Naive thymus-derived CD4-positive, alpha-beta T cell (primary cell): ENCODE measurements at regions of chr1 and their contacts with region 1.

Region 1: GRCh38 chr1:7042322-7043190 is 257.3 kb downstream of the CAMTA1 start:
- DNase-seq: peak in 2 of 9 donors; percentile 11 to 12
- ATAC-seq: no peak
- H3K4me3 ChIP-seq: no peak overlapping the region
- H3K4me3 Mint-ChIP-seq: no peak overlapping the region
- H3K27ac ChIP-seq: no peak overlapping the region
- H3K27ac Mint-ChIP-seq: no peak overlapping the region
- H3K4me1 ChIP-seq: no peaks in the 10 kb centered on the region
- H3K4me1 Mint-ChIP-seq: no peaks in the 10 kb centered on the region
- H3K27me3 ChIP-seq: no peaks in the 10 kb centered on the region
- H3K27me3 Mint-ChIP-seq: peaks cover 3 to 12% (median 4%) of the 10 kb centered on the region in 5 donors

Region 2: DNA sequence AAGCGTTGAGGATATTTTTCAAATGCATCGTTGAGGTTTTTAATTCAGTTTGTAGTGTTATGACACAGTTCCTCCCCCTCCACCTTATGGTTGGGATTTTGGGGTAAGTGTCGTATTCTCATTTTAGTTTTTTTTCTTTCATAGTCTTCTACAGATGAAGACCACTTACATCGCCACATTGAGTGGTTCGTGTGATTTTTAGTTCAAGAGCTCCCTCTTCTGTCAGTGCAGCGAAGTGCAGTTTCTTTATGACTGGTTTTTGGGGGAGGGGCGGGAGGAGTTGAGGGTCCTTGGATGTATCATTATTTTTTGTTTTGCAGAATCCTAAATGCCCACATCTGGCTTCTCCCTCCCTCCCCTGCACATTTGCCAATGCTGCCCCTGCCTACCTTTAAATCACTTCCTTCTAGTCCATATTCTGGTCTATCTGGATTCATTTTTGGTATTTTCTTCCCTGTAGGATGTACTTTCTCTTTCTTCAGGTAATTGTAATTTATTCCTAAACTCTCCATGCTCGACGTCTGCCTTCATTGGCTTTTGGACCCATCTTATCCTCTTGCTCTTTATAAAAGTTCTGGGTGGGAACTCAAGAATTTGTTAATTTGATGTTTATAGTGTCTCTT is 175.8 kb after region 1 on chr1:
- CTCF ChIA-PET with region 1: no interaction called
- POLR2A ChIA-PET with region 1: no interaction called
- intact Hi-C with region 1: loop called (anchors 2 kb)
- DNase-seq: peak in 4 of 9 donors; percentile 9 to 23 (median 10)
- ATAC-seq: no peak
- H3K4me3 ChIP-seq: no peak overlapping the region
- H3K4me3 Mint-ChIP-seq: no peak overlapping the region
- H3K27ac ChIP-seq: no peak overlapping the region
- H3K27ac Mint-ChIP-seq: no peak overlapping the region
- H3K4me1 ChIP-seq: no peaks in the 10 kb centered on the region
- H3K4me1 Mint-ChIP-seq: peaks cover 0 to 7% (median 0%) of the 10 kb centered on the region in 7 donors
- H3K27me3 ChIP-seq: no peaks in the 10 kb centered on the region
- H3K27me3 Mint-ChIP-seq: peaks cover 4 to 48% (median 37%) of the 10 kb centered on the region in 5 donors

Region 3: DNA sequence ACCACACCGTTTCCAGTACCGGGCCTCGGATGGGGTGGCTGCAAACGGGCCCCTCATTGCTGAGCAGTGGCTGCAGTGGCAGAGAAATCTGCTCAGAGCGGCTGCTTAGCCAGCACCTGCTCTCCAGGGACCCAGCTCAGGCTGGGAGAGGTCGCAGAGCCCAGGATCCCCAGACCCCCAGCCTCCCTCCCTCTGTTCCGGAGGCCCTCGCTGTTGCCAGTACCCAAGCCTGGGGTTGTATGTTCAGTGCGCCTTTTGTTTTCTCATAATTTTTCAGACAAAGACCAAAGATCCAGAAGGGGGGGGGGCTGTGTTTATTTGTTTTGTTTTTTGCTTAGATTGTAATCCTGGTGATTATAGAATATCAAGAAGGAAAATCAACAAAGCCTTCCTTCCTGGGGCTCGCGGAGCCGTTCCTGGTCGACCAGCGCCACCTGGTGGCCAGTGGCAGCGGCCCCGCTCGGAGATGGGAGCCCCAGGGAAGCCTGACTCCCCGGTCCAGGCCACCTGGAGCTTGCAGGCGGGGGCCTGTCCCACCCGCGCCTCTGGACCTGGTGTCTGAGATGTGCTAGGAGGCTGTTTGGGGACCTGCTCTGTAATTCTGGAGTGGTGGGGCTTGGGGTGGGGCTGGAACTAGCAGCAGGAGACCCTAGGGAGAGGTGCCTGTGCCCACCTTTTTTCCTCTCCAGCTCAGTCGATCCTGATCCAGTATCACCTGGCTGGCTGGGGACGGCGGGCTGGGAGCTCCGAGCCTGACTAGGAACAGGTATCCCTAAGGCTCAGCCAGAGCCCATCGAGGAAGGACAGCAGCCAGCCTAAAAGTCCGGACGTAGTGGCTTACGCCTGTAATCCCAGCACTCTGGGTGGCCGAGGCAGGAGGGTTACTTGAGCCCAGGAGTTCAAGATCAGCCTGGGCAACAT is 604.7 kb after region 1 on chr1:
- CTCF ChIA-PET with region 1: no interaction called
- POLR2A ChIA-PET with region 1: no interaction called
- intact Hi-C with region 1: loop called in 1 of 2 experiments (anchors 10 kb)
- DNase-seq: peak; percentile 16 to 75 (median 46)
- ATAC-seq: peak; percentile 56
- H3K4me3 ChIP-seq: no peak overlapping the region
- H3K4me3 Mint-ChIP-seq: no peak overlapping the region
- H3K27ac ChIP-seq: no peak overlapping the region
- H3K27ac Mint-ChIP-seq: no peak overlapping the region
- H3K4me1 ChIP-seq: no peaks in the 10 kb centered on the region
- H3K4me1 Mint-ChIP-seq: peaks cover 0 to 6% (median 0%) of the 10 kb centered on the region in 7 donors
- H3K27me3 ChIP-seq: no peaks in the 10 kb centered on the region
- H3K27me3 Mint-ChIP-seq: peaks cover 0 to 3% (median 0%) of the 10 kb centered on the region in 5 donors